ENCODE measurements at regions of chr1 and their contacts with region 1.

Region 1: DNA sequence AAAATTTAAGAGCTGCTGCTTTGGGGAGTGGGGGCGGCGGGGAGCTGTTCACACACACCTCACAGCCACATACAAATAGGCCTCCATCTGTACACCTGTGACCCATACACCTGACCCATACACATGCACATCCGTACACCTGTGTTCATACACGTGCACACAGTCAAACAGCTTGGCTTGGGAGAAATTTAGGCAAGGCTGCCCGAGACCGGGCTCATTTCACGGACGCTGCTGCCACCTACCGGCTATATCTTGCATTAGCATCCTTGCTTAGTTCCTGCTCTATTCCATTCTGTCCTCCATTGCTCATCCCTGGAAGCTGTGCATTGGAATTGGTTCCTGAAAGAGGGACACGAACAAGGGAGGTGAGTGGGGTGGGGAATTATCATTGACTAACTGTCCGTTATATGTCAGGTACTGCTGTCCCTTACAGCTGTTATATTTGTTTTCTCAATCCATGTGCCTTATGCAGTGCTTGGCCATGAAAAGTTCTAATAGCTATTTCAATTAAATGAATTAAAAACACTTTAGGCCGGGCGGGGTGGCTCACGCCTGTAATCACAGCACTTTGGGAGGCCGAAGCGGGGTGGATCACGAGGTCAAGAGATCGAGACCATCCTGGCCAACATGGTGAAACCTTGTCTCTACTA is 37.1 kb upstream of the EPB41 start:
- DNase-seq: peak in 1 of 2 experiments; percentile 92
- H3K4me3 ChIP-seq: no peak overlapping the region
- H3K27ac ChIP-seq: no peak overlapping the region
- H3K4me1 ChIP-seq: no peaks in the 10 kb centered on the region
- H3K27me3 ChIP-seq: no peaks in the 10 kb centered on the region
- CTCF ChIP-seq: peak; percentile 79 to 96 (median 92)
- EP300 ChIP-seq: no peak
- POLR2A ChIP-seq: no peak
- RAD21 ChIP-seq: peak; percentile 99

Region 2: DNA sequence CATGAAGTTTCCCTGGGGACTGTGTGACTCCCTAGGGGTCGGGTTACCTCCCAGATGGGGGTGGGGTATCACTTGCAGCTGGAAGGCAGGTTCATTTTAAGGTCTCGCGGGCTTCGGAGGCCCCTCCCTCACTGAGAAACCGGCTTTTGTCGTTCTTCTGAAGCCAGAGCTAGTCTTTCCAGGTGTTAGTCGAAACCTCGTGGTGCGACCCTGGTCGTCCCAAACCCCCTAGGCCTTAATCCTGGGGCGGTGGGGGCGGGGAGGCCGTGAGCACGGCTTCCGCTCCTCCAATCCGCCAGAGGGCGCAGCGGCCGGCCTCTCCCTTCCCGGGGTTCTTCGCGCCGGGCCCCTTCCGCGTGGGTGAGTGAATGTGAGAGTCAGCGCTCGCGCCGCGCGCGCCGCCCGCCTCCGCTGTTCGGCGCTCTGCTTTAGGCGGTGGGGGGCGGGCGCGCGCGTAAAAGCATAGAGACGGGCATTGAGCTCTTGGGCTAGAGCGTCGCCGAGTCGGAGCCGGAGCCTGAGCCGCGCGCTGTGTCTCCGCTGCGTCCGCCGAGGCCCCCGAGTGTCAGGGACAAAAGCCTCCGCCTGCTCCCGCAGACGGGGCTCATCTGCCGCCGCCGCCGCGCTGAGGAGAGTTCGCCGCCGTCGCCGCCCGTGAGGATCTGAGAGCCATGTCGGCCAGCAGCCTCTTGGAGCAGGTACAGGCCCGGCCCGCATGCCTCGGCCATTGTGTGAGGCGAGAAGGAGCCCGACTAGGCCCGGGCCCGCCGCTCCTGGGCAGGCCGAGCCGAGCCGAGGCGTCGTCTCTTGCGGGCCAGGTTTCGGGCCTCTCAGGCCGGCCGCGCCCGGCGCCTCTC is 140.6 kb before region 1 on chr1 and contains the start of gene YTHDF2:
- CTCF ChIA-PET with region 1: interaction called, 12 read pairs
- POLR2A ChIA-PET with region 1: interaction called, 5 read pairs
- DNase-seq: peak; percentile 94 to 97
- H3K4me3 ChIP-seq: peak within 1 kb of the TSS; percentile 88 to 97 (median 94)
- H3K27ac ChIP-seq: peak within 1 kb of the TSS; percentile 98
- H3K4me1 ChIP-seq: peaks cover 0 to 11% (median 3%) of the 10 kb centered on the region in 4 experiments; a peak in 6 of 7 replicates
- H3K27me3 ChIP-seq: no peaks in the 10 kb centered on the region
- CTCF ChIP-seq: peak; percentile 73 to 84 (median 83)
- EP300 ChIP-seq: peak in 1 of 2 experiments; percentile 76; a peak in 1 of 3 replicates
- POLR2A ChIP-seq: peak; percentile 27 to 91
- RAD21 ChIP-seq: peak; percentile 29 to 34
- total RNA-seq, gene YTHDF2: 159 and 164 TPM in 2 replicates

Region 3: GRCh38 chr1:28782011-28782410 is 95.2 kb before region 1 on chr1:
- CTCF ChIA-PET with region 1: interaction called, 160 read pairs
- POLR2A ChIA-PET with region 1: interaction called, 4 read pairs
- DNase-seq: no peak
- H3K4me3 ChIP-seq: no peak overlapping the region
- H3K27ac ChIP-seq: no peak overlapping the region
- H3K4me1 ChIP-seq: no peaks in the 10 kb centered on the region
- H3K27me3 ChIP-seq: no peaks in the 10 kb centered on the region
- CTCF ChIP-seq: no peak
- EP300 ChIP-seq: no peak
- POLR2A ChIP-seq: no peak
- RAD21 ChIP-seq: no peak

Region 4: GRCh38 chr1:28830814-28831213 is 46.4 kb before region 1 on chr1:
- CTCF ChIA-PET with region 1: interaction called, 20 read pairs
- POLR2A ChIA-PET with region 1: no interaction called
- DNase-seq: no peak
- H3K4me3 ChIP-seq: no peak overlapping the region
- H3K27ac ChIP-seq: no peak overlapping the region
- H3K4me1 ChIP-seq: peaks cover 0 to 2% (median 0%) of the 10 kb centered on the region in 4 experiments; a peak in 3 of 7 replicates
- H3K27me3 ChIP-seq: no peaks in the 10 kb centered on the region
- CTCF ChIP-seq: no peak
- EP300 ChIP-seq: no peak
- POLR2A ChIP-seq: no peak
- RAD21 ChIP-seq: no peak

Region 5: GRCh38 chr1:28860332-28861073 is 16.8 kb before region 1 on chr1:
- CTCF ChIA-PET with region 1: interaction called, 56 read pairs
- POLR2A ChIA-PET with region 1: no interaction called
- DNase-seq: no peak
- H3K4me3 ChIP-seq: no peak overlapping the region
- H3K27ac ChIP-seq: no peak overlapping the region
- H3K4me1 ChIP-seq: peaks cover 0 to 1% (median 0%) of the 10 kb centered on the region in 4 experiments; a peak in 1 of 7 replicates
- H3K27me3 ChIP-seq: no peaks in the 10 kb centered on the region
- CTCF ChIP-seq: no peak
- EP300 ChIP-seq: no peak
- POLR2A ChIP-seq: no peak
- RAD21 ChIP-seq: no peak

Region 6: DNA sequence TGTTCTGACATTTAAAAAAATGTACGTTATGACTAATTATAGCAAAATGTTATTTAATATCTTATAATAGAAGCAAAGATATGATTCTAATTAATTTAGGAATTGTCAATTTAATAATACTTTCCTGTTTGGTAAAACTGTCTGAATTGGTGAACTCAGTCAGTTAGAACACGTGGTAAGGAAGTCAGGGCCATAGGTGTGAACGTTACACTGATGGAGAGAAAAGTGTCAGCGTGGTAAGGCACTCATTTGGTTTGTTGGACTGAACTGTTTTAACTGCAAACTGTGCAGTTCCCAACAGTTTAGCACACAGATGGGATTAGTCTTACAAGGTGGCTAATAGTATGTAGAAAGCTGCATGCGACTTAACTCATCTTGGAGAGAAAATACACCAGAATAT is 140.0 kb after region 1 on chr1:
- CTCF ChIA-PET with region 1: no interaction called
- POLR2A ChIA-PET with region 1: no interaction called
- DNase-seq: no peak
- H3K4me3 ChIP-seq: no peak overlapping the region
- H3K27ac ChIP-seq: no peak overlapping the region
- H3K4me1 ChIP-seq: no peaks in the 10 kb centered on the region; a peak in 1 of 7 replicates
- H3K27me3 ChIP-seq: no peaks in the 10 kb centered on the region
- CTCF ChIP-seq: no peak
- EP300 ChIP-seq: no peak
- POLR2A ChIP-seq: no peak
- RAD21 ChIP-seq: no peak

Region 7: DNA sequence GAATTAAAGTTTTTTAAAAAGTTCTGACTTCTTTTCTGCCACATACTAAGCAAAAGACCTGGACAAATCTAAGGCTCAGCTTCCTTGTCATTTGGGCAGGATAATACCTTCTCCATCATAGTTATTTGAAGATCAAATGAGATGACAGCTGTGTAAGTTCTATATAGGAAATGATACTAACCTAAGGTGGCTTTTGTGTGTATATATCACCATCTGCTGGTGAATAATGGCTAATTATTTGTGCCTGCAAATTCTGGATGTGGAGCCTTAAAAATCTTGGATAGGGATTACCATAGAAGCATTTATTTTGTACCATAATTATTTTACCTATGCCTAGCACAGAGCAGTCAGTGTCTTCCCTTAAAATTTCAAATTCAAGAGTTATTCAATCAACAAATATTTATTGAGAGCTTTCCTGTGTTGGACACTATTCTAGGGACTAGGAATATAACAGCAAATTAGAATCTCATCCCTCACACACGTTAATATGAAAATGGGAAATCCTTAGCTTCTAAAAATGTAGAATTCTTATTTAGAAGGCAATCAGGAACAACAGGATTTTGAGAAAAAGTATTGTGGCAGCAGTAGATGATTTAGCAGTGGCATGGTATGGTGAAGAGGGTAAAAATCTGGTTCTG is 156.7 kb after region 1 on chr1:
- CTCF ChIA-PET with region 1: interaction called, 207 read pairs
- POLR2A ChIA-PET with region 1: interaction called, 3 read pairs
- DNase-seq: no peak
- H3K4me3 ChIP-seq: no peak overlapping the region
- H3K27ac ChIP-seq: no peak overlapping the region
- H3K4me1 ChIP-seq: no peaks in the 10 kb centered on the region; a peak in 1 of 7 replicates
- H3K27me3 ChIP-seq: no peaks in the 10 kb centered on the region
- CTCF ChIP-seq: peak in 2 of 3 experiments; percentile 38 to 44; a peak in 2 of 4 replicates
- EP300 ChIP-seq: no peak
- POLR2A ChIP-seq: no peak
- RAD21 ChIP-seq: peak; percentile 81 to 83

Measured in H1 (cell line).